ENCODE measurements at regions of chr11 and their contacts with region 1.

Region 1: GRCh38 chr11:124961972-124962609 is 8.1 kb downstream of the CCDC15 start:
- DNase-seq: no peak
- H3K4me3 ChIP-seq: no peak overlapping the region
- H3K27ac ChIP-seq: no peak overlapping the region
- H3K4me1 ChIP-seq: no peaks in the 10 kb centered on the region
- H3K27me3 ChIP-seq: no peaks in the 10 kb centered on the region
- CTCF ChIP-seq: peak; percentile 57 to 64 (median 59)
- EP300 ChIP-seq: no peak
- POLR2A ChIP-seq: no peak

Region 2: GRCh38 chr11:125016413-125016812 is 54.3 kb after region 1 on chr11:
- intact Hi-C with region 1: no loop called
- DNase-seq: no peak
- H3K4me3 ChIP-seq: no peak overlapping the region
- H3K27ac ChIP-seq: no peak overlapping the region
- H3K4me1 ChIP-seq: no peaks in the 10 kb centered on the region
- H3K27me3 ChIP-seq: no peaks in the 10 kb centered on the region
- CTCF ChIP-seq: no peak
- EP300 ChIP-seq: no peak
- POLR2A ChIP-seq: no peak

Region 3: GRCh38 chr11:125141686-125142535 is 179.8 kb after region 1 on chr11:
- intact Hi-C with region 1: loop called (anchors 5 kb)
- DNase-seq: no peak
- H3K4me3 ChIP-seq: no peak overlapping the region
- H3K27ac ChIP-seq: no peak overlapping the region
- H3K4me1 ChIP-seq: peaks cover 2 to 7% (median 6%) of the 10 kb centered on the region in 4 donors
- H3K27me3 ChIP-seq: peaks cover 0 to 55% (median 4%) of the 10 kb centered on the region in 4 donors
- CTCF ChIP-seq: peak; percentile 91 to 98 (median 91)
- EP300 ChIP-seq: no peak
- POLR2A ChIP-seq: no peak

Region 4: GRCh38 chr11:125345421-125346178 is 383.5 kb after region 1 on chr11:
- intact Hi-C with region 1: loop called (anchors 5 kb)
- DNase-seq: peak; percentile 94
- H3K4me3 ChIP-seq: no peak overlapping the region
- H3K27ac ChIP-seq: peak overlapping the region; percentile 33 to 70 (median 56)
- H3K4me1 ChIP-seq: peaks cover 11 to 38% (median 34%) of the 10 kb centered on the region in 4 donors
- H3K27me3 ChIP-seq: no peaks in the 10 kb centered on the region
- CTCF ChIP-seq: peak; percentile 86 to 95 (median 93)
- EP300 ChIP-seq: no peak
- POLR2A ChIP-seq: no peak

Region 5: DNA sequence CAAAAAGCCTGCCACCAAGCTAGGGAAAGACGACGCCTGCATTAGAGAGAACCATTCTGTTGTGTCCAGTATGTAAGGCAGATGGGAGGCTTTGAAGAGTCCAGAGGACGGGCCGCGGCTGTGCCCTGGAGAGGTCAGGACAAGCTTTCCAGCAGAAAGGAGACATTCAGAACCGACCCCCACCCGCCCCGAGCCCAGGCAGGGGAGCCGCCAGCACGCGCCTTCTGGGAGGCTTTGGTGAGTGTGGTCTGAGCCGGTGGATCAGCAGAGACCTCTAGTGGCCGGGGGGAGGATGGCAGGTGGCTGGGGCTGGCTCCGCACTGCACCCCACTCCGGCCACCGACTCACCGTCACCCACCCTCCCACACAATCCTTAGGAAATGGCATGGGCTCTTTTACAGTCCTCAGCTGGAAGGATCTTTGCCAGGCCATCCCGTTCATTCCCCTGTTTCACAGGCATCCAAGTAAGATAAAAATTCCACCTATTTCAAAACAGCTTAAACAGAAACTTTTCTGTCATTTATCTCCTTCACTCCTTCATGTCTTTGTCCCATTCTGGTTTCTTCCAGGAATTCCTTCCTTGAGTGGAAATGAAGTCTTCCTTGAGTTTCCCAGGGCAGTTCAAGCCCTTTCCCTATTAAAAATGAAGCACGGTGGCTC is 442.8 kb after region 1 on chr11:
- intact Hi-C with region 1: loop called (anchors 2 kb)
- DNase-seq: no peak
- H3K4me3 ChIP-seq: peak overlapping the region in 3 of 4 donors; percentile 4 to 25 (median 25)
- H3K27ac ChIP-seq: no peak overlapping the region
- H3K4me1 ChIP-seq: peaks cover 0 to 16% (median 8%) of the 10 kb centered on the region in 4 donors
- H3K27me3 ChIP-seq: peaks cover 0 to 13% (median 2%) of the 10 kb centered on the region in 4 donors
- CTCF ChIP-seq: peak in 2 of 3 experiments; percentile 94 to 95
- EP300 ChIP-seq: no peak
- POLR2A ChIP-seq: no peak